Mammary epithelial cell (primary cell): ENCODE measurements at regions of chr2 and their contacts with region 1.

Region 1: DNA sequence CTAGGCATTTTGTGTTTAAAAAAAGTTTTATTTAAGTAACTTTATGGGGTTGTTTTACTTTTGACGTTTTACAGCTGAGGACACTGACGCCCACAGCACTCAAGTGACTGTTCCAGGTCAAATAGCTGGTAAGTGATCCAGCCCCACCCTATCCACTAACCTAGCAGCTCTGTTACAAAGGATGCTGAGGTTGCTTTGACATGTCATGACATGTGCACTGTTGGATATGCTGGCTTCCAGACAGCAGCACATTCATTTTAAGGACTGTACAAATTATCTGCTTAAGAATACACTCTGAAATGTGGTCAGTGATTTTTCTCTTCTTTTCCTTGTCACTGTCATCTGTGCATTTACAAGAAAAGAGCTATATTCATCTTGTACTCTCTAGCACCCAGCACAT is 417.5 kb downstream of the ZEB2 start:
- DNase-seq: peak; percentile 89
- H3K4me3 ChIP-seq: no peak overlapping the region
- H3K27ac ChIP-seq: peak overlapping the region; percentile 38
- H3K4me1 ChIP-seq: peaks cover 31% of the 10 kb centered on the region
- H3K27me3 ChIP-seq: no peaks in the 10 kb centered on the region
- CTCF ChIP-seq: no peak

Region 2: GRCh38 chr2:144063602-144064001 is 38.8 kb before region 1 on chr2:
- CTCF ChIA-PET with region 1: no interaction called
- dilution Hi-C with region 1: no loop called
- in situ Hi-C with region 1: no loop called
- intact Hi-C with region 1: no loop called
- DNase-seq: no peak
- H3K4me3 ChIP-seq: no peak overlapping the region
- H3K27ac ChIP-seq: no peak overlapping the region
- H3K4me1 ChIP-seq: no peaks in the 10 kb centered on the region
- H3K27me3 ChIP-seq: no peaks in the 10 kb centered on the region
- CTCF ChIP-seq: no peak

Region 3: DNA sequence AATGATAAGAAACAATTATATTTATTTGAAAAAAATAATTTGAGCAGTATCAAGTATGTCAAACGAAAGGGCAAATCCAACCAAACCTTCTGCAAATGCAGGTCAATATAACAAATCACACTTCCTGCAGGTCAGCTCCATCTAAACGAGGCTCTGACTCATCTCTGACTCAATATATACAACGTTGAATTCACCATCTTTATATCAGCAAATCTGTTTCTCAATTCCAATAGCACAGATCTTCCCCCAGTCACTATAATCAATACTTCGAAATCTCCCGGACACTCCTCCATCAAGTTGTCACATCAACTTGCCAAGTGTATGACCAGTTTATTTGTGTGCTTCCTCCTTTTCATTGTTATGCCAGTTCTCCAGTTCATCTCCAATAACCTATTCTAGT is 28.7 kb after region 1 on chr2:
- CTCF ChIA-PET with region 1: no interaction called
- dilution Hi-C with region 1: no loop called
- in situ Hi-C with region 1: no loop called
- intact Hi-C with region 1: loop called (anchors 1 kb)
- DNase-seq: peak; percentile 29
- H3K4me3 ChIP-seq: no peak overlapping the region
- H3K27ac ChIP-seq: no peak overlapping the region
- H3K4me1 ChIP-seq: no peaks in the 10 kb centered on the region
- H3K27me3 ChIP-seq: no peaks in the 10 kb centered on the region
- CTCF ChIP-seq: no peak